ENCODE measurements at regions of chr3 and their contacts with region 1.

Region 1: GRCh38 chr3:148991194-148992026 is at the start of gene GYG1:
- DNase-seq: peak; percentile 60 to 89 (median 74)
- H3K4me3 ChIP-seq: peak within 1 kb of the TSS; percentile 67 to 99 (median 90)
- H3K27ac ChIP-seq: peak within 1 kb of the TSS in 58 of 59 donors; percentile 41 to 97 (median 86)
- H3K27me3 ChIP-seq: no peaks in the 10 kb centered on the region
- CTCF ChIP-seq: peak in 54 of 56 donors; percentile 22 to 75 (median 50)
- total RNA-seq, gene GYG1: 10.1 to 70.8 (median 37.8) TPM

Region 2: GRCh38 chr3:149086232-149086988 is 95.0 kb after region 1 on chr3 and contains the start of gene HLTF:
- intact Hi-C with region 1: loop called (anchors 2 to 10 kb)
- DNase-seq: peak; percentile 90 to 97 (median 95)
- H3K4me3 ChIP-seq: peak within 1 kb of the TSS; percentile 45 to 97 (median 85)
- H3K27ac ChIP-seq: peak within 1 kb of the TSS in 56 of 59 donors; percentile 0 to 91 (median 79)
- H3K27me3 ChIP-seq: no peaks in the 10 kb centered on the region
- CTCF ChIP-seq: peak in 17 of 56 donors; percentile 2 to 37 (median 13)
- total RNA-seq, gene HLTF: 29.5 to 74.9 (median 50.5) TPM

Region 3: DNA sequence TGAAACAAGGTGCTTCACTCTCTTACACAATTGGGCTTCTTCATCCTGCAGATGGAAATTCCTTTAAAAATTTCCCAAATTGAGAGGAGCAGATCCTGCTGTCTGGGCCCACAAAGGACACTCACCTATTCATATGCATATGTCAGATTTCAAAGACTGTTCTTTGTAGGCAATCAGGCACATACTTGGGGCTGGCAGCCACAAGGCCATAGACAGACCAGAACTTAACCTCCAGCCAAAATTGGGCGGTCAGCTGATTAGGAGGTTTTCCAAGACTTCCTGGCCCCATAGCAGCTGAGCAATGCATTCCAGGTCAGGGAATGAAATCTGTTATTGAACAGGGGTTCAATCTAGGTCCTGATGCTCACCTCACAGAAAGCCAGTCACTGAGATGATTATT is 123.0 kb after region 1 on chr3:
- intact Hi-C with region 1: loop called in 1 of 2 experiments (anchors 10 kb)
- DNase-seq: no peak
- H3K4me3 ChIP-seq: no peak overlapping the region
- H3K27ac ChIP-seq: no peak overlapping the region
- H3K27me3 ChIP-seq: no peaks in the 10 kb centered on the region
- CTCF ChIP-seq: no peak